ENCODE measurements at regions of chr3 and their contacts with region 1.

Region 1: DNA sequence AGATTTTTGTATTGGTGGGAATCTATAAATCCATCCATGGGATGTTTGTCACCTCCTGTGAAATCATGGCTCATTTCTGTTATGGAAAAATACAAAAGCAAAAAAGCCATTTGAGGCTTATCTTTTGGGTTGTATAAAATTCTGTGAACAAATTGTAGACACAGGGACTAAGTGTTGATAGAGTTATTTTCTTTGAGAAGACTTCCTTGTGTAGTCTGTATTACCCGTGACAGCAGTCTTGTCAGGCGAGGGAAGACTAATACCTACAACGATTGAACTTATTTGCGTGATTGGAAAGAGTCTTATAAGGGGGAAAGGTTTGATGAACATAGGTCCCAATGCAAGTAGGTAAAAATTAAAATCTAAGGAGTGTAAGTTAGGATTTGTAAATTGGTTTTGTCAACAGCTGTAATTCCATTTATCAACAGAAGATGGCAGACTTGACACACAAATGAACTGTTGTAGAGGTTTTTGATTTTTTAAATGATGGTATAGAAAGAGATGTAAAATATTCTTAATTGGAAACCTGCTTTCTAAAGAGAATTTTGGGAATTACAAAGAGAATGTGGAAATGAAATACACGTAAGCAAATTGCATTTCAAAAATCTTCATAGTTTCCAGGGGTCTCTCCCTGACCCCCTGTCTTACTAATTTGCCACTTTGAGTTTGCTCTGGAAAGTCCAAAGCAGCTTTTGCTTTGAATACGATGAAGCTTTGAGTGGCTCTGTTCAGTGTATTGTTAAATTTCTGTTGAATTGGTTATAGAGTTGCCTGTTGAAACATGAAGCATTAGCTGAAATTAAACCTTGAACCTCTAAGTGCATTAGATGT is 33.2 kb downstream of the SLC25A26 start:
- DNase-seq: no peak
- H3K4me3 ChIP-seq: no peak overlapping the region
- H3K27ac ChIP-seq: peak overlapping the region in 2 of 4 donors; percentile 8 to 38
- H3K4me1 ChIP-seq: peaks cover 0 to 7% (median 0%) of the 10 kb centered on the region in 4 donors
- H3K27me3 ChIP-seq: no peaks in the 10 kb centered on the region
- CTCF ChIP-seq: peak; percentile 77 to 92 (median 89)
- EP300 ChIP-seq: no peak
- POLR2A ChIP-seq: no peak

Region 2: GRCh38 chr3:66816090-66816761 is 562.2 kb after region 1 on chr3:
- in situ Hi-C with region 1: no loop called
- intact Hi-C with region 1: loop called (anchors 5 kb)
- DNase-seq: no peak
- H3K4me3 ChIP-seq: no peak overlapping the region
- H3K27ac ChIP-seq: peak overlapping the region in 1 of 4 donors; percentile 18
- H3K4me1 ChIP-seq: peaks cover 0 to 13% (median 0%) of the 10 kb centered on the region in 4 donors
- H3K27me3 ChIP-seq: no peaks in the 10 kb centered on the region
- CTCF ChIP-seq: peak; percentile 57 to 81 (median 71)
- EP300 ChIP-seq: no peak
- POLR2A ChIP-seq: no peak

Region 3: DNA sequence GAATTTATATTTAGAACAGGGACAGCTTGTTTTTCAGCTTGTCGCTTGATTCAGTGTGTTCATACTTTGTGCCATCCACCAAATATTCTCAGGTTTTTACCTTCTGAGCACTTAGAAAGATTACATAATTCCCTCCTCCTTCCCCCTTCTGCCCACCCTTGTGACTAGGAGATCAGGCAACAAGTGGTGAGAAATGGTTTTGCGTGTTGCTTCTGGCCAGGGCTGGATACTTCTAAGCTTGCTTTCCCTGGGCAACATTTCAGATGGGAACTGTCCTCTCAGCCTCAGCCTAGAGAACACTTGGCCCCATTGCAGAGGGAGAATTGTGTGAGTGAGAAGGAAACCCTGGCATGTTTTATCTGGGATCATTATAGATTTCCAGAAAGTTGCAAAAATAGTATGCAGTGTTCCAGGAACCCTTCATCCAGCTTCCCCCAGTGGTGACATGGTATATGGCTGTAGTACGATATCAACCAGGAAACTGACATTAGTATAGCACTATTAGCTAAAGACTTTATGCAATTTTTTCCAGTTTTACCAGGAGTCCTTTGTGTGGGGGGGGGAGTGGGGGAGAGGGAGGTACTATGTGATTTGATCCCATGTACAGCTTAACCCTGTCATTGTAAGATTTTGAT is 577.8 kb after region 1 on chr3:
- in situ Hi-C with region 1: no loop called
- intact Hi-C with region 1: loop called (anchors 5 kb)
- DNase-seq: no peak
- H3K4me3 ChIP-seq: no peak overlapping the region
- H3K27ac ChIP-seq: peak overlapping the region in 1 of 4 donors; percentile 18
- H3K4me1 ChIP-seq: peaks cover 0 to 20% (median 10%) of the 10 kb centered on the region in 4 donors
- H3K27me3 ChIP-seq: no peaks in the 10 kb centered on the region
- CTCF ChIP-seq: no peak
- EP300 ChIP-seq: no peak
- POLR2A ChIP-seq: no peak

Measured in transverse colon (tissue), 4 donors.